ENCODE measurements at regions of chr9 and their contacts with region 1.

Region 1: DNA sequence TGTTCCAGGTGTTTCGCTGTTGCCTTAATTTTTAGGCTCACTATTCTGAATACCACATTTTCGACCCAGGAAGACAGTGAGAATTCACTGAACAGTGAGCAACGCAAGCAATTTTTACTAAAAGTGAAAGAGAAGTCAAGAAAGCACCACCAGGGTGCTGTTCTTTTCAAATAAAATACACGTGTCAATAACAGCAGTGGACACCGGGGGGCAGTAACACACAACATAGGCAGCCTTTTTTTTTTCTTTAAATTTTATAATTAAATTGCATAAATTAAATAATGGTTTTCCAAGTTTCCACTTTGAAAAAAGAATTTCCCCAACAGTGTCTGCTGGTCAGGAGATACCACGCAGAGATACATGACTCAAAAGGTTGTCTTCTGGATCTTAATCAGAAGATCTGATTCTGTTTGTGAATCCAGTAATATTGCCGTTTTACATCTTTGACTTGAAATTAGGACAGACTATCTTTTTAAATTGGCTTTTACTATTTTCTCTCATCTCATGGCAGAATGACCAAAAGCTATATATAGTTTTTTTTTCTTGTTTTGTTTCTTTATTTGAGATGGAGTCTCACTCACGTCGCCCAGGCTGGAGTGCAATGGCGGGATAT is 47.1 kb upstream of the SH3GL2 start:
- DNase-seq: peak; percentile 53
- H3K4me3 ChIP-seq: no peak overlapping the region
- H3K27ac ChIP-seq: no peak overlapping the region
- H3K4me1 ChIP-seq: no peaks in the 10 kb centered on the region
- H3K27me3 ChIP-seq: no peaks in the 10 kb centered on the region
- CTCF ChIP-seq: peak; percentile 48 to 56
- POLR2A ChIP-seq: no peak

Region 2: GRCh38 chr9:17802249-17802857 is 270.6 kb after region 1 on chr9:
- CTCF ChIA-PET with region 1: interaction called, 24 read pairs
- POLR2A ChIA-PET with region 1: no interaction called
- dilution Hi-C with region 1: no loop called
- intact Hi-C with region 1: loop called (anchors 1 kb)
- DNase-seq: peak; percentile 31
- H3K4me3 ChIP-seq: no peak overlapping the region
- H3K27ac ChIP-seq: no peak overlapping the region
- H3K4me1 ChIP-seq: no peaks in the 10 kb centered on the region
- H3K27me3 ChIP-seq: peaks cover 2 to 5% of the 10 kb centered on the region in 2 experiments
- CTCF ChIP-seq: peak; percentile 33 to 37
- POLR2A ChIP-seq: no peak

Region 3: GRCh38 chr9:19028835-19029451 is 1497.2 kb after region 1 on chr9:
- CTCF ChIA-PET with region 1: no interaction called
- POLR2A ChIA-PET with region 1: no interaction called
- dilution Hi-C with region 1: no loop called
- intact Hi-C with region 1: loop called (anchors 5 kb)
- DNase-seq: peak; percentile 59
- H3K4me3 ChIP-seq: no peak overlapping the region
- H3K27ac ChIP-seq: no peak overlapping the region
- H3K4me1 ChIP-seq: no peaks in the 10 kb centered on the region
- H3K27me3 ChIP-seq: no peaks in the 10 kb centered on the region
- CTCF ChIP-seq: peak; percentile 58 to 66
- POLR2A ChIP-seq: no peak

Measured in endothelial cell of umbilical vein (primary cell).